Endothelial cell of umbilical vein (primary cell): ENCODE measurements at regions of chr11 and their contacts with region 1.

Region 1: DNA sequence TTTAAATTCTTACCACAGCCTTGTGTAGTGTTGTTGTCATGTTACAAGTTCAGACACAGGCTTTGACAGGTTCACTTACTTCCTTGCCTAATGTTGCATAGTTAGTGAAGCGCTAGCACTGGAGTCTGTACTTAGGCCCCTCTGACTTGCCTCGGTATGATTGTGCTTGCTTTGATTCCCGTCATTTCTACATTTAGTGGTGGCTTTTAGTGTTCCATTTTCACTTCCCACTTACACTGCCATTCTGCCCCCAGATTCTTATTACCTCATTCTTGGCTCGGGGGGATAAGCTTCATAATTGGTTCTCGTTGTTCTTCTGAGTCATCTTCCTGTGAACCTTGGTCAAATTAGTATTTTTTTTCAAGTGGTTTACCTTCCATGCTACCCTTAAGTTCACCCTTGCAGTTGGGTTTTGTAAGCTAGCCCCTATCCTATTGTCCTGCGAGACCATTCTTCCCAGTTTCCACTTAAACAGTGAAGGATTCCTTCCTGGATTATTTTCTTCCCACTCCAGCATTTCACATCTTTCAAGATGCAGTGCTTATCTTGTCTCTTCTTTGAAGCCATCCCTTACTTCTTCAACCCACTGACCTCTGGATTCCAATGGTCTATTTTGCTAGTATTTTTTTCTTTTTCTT is 68.7 kb downstream of the DDX10 start:
- DNase-seq: peak; percentile 63
- H3K4me3 ChIP-seq: no peak overlapping the region
- H3K27ac ChIP-seq: peak overlapping the region; percentile 52
- H3K4me1 ChIP-seq: peaks cover 23% of the 10 kb centered on the region
- H3K27me3 ChIP-seq: no peaks in the 10 kb centered on the region
- CTCF ChIP-seq: no peak
- POLR2A ChIP-seq: no peak

Region 2: DNA sequence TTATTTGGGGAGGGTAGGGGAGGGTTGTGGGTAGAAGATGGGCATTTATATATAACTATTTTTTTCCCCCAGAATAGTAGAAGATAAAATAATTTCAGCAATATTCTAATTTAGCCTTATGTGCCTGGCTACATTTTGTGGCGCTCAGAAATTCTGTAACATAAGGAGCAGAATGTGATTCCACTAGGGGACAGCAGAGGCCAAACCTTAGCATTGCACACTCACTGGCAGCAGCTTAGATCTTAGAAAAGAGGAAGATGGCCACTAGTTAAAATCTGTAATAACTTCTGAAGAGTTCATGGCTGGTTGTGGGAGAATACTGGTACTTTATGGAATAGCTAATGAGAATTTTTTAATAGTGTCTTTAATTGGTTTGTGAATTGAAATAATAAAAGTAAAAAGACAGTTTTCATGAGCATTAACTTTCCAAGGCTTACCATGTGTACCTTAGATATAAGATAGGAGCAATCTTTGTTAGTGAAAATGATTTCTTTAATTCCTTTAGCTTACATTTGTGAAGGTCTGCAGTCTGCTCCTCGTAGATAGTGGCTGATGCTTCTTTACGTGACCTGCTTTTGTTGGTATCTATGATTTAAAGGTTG is 35.6 kb before region 1 on chr11:
- CTCF ChIA-PET with region 1: interaction called, 28 read pairs
- POLR2A ChIA-PET with region 1: no interaction called
- dilution Hi-C with region 1: no loop called
- intact Hi-C with region 1: loop called (anchors 2 kb)
- DNase-seq: peak; percentile 78
- H3K4me3 ChIP-seq: no peak overlapping the region
- H3K27ac ChIP-seq: no peak overlapping the region
- H3K4me1 ChIP-seq: no peaks in the 10 kb centered on the region
- H3K27me3 ChIP-seq: no peaks in the 10 kb centered on the region
- CTCF ChIP-seq: peak; percentile 78 to 79
- POLR2A ChIP-seq: no peak

Region 3: GRCh38 chr11:108718466-108718865 is 15.1 kb before region 1 on chr11:
- CTCF ChIA-PET with region 1: interaction called, 21 read pairs
- POLR2A ChIA-PET with region 1: interaction called, 3 read pairs
- dilution Hi-C with region 1: no loop called
- intact Hi-C with region 1: no loop called
- DNase-seq: no peak
- H3K4me3 ChIP-seq: no peak overlapping the region
- H3K27ac ChIP-seq: no peak overlapping the region
- H3K4me1 ChIP-seq: no peaks in the 10 kb centered on the region
- H3K27me3 ChIP-seq: no peaks in the 10 kb centered on the region
- CTCF ChIP-seq: no peak
- POLR2A ChIP-seq: no peak

Region 4: DNA sequence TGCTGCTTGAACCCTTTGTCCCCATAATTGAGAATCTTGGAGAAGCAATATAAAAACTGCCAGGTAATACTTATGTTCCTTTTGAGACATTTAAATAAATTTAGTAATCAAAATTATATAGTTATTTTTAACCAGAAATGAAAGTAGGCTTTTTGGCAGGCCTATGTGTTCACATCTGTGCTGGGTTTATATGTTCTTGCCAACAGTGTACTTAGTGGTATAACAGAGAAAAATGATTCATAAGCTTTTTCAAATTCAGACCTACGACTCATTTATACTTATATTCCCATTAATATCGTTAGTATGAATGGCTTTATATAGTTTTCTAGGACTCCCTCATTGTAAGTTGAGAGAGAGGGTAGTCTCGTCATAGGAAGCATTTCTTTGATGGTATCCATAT is 10.3 kb after region 1 on chr11:
- CTCF ChIA-PET with region 1: interaction called, 11 read pairs
- POLR2A ChIA-PET with region 1: no interaction called
- dilution Hi-C with region 1: no loop called
- intact Hi-C with region 1: no loop called
- DNase-seq: no peak
- H3K4me3 ChIP-seq: no peak overlapping the region
- H3K27ac ChIP-seq: no peak overlapping the region
- H3K4me1 ChIP-seq: no peaks in the 10 kb centered on the region
- H3K27me3 ChIP-seq: no peaks in the 10 kb centered on the region
- CTCF ChIP-seq: no peak
- POLR2A ChIP-seq: no peak

Region 5: GRCh38 chr11:108754901-108755632 is 21.5 kb after region 1 on chr11:
- CTCF ChIA-PET with region 1: interaction called, 14 read pairs
- POLR2A ChIA-PET with region 1: no interaction called
- dilution Hi-C with region 1: no loop called
- intact Hi-C with region 1: no loop called
- DNase-seq: peak; percentile 18
- H3K4me3 ChIP-seq: no peak overlapping the region
- H3K27ac ChIP-seq: no peak overlapping the region
- H3K4me1 ChIP-seq: no peaks in the 10 kb centered on the region
- H3K27me3 ChIP-seq: no peaks in the 10 kb centered on the region
- CTCF ChIP-seq: no peak
- POLR2A ChIP-seq: no peak